Calu3 (cell line): ENCODE measurements at regions of chrX and their contacts with region 1.

Region 1: GRCh38 chrX:7568130-7568529 is 274.8 kb upstream of the VCX start:
- DNase-seq: no peak
- H3K4me3 Mint-ChIP-seq: no peak overlapping the region
- H3K27ac Mint-ChIP-seq: no peak overlapping the region
- H3K4me1 Mint-ChIP-seq: no peaks in the 10 kb centered on the region
- H3K27me3 Mint-ChIP-seq: no peaks in the 10 kb centered on the region
- CTCF ChIP-seq: no peak

Region 2: DNA sequence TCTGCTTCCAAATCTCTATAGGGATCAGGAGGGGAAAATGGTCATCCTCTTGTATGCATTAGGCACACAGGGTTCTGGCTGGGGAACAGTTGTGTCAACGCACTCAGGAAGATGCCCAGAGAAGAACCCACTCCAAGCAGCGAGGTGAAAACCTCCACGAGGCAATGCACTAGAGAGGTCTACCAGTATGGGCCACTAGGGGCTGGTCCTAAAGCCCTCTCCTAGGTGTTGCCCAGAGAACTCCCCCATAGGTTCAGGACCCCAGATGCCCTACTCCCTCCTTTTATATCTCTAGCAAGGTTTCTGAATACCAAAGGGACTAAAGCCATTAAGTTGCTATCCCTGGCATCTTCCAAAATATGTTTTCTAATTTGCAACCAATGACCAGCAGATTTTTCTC is 1196.8 kb before region 1 on chrX:
- CTCF ChIA-PET with region 1: no interaction called
- intact Hi-C with region 1: loop called (anchors 5 kb)
- DNase-seq: no peak
- H3K4me3 Mint-ChIP-seq: no peak overlapping the region
- H3K27ac Mint-ChIP-seq: no peak overlapping the region
- H3K4me1 Mint-ChIP-seq: no peaks in the 10 kb centered on the region
- H3K27me3 Mint-ChIP-seq: no peaks in the 10 kb centered on the region
- CTCF ChIP-seq: no peak

Region 3: DNA sequence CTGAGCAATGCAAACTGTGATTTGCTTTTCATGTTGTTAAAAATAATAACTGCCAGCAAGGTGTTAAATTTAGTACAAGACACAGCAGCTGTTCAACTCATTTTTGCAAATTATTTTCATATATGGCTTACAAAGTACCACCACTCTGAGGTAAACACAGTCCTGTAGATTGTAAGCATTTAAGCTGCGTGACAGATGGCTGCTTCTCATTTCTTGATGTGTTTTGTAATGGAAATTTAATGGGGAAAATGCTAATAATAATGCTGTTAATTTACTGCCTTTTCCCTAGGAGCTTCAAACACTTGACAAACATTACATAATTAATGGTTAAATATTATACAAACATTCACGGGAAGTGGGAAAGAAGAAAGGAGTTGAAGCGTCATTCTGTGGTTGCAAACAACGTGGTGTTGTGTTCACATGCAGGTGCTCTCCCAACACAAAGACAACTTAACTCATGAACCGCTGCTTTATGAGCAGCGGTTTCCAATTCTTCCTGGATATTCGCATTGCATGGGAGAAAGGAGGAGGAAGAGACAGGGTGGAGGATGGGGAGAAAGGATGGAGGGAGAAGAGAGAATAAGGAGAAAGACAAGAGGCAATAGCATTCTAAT is 38.0 kb after region 1 on chrX:
- CTCF ChIA-PET with region 1: no interaction called
- intact Hi-C with region 1: no loop called
- DNase-seq: no peak
- H3K4me3 Mint-ChIP-seq: no peak overlapping the region
- H3K27ac Mint-ChIP-seq: no peak overlapping the region
- H3K4me1 Mint-ChIP-seq: no peaks in the 10 kb centered on the region
- H3K27me3 Mint-ChIP-seq: no peaks in the 10 kb centered on the region
- CTCF ChIP-seq: no peak